Activated T-helper 1 cell treated with anti-CD3 and anti-CD28 coated beads, Interleukin-12 subunit alpha, Interleukin-12 subunit beta, Interleukin-2, Interleukin-4 antibody, amounts not matched to agents 30 ng/mL and 10 ng/mL and 1 ng/mL, durations not matched to agents 14 hours and 24 hours and 36 hours (primary cell): ENCODE measurements at regions of chr10 and their contacts with region 1.

Region 1: DNA sequence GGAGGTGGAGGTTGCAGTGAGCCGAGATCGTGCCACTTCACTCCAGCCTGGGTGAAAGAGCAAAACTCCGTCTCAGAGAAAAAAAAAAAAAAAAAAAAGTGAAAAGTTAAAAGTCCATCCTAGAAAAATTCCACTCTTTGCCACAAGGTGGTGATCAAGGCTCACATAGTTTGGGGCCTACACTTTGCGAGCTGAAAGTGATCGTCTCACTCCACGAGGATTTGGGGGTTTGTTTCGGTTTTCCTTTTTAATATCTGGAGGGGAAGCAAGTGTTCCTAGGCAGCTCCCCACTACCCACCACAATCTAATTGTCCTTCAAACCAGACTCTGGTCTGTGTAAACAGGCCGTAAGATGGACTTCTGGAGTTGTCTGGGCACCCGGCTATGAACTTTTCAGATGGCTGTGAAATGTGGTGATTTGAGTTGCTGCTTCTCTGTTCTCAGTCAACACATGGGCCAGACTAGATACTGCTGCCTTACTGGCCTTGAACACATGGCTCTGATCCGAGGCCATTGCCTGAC is 27.1 kb downstream of the PRLHR start:
- DNase-seq: peak; percentile 40
- H3K4me3 Mint-ChIP-seq: peak overlapping the region; percentile 5
- H3K27ac Mint-ChIP-seq: no peak overlapping the region
- H3K4me1 Mint-ChIP-seq: no peaks in the 10 kb centered on the region
- H3K27me3 Mint-ChIP-seq: peaks cover 4% of the 10 kb centered on the region

Region 2: DNA sequence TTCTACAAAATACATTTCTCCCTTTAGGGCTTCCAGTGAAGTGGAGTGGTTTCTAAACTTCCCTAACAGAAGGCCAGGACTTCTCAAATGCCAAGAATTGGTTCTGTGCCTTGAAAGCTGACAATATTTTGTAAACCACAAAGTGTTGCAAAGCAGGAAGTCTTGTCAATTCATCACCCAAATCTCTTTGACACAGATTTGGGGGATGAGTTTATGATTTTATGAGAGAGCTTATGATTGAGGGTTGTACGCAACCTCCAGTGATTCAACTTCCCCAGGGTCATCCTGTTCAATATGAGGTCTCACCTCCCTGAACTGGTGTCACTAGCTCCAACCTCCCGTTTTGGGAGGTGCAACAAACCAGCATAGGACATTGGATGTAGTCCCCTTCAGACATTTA is 56.7 kb before region 1 on chr10:
- intact Hi-C with region 1: no loop called
- DNase-seq: no peak
- H3K4me3 Mint-ChIP-seq: no peak overlapping the region
- H3K27ac Mint-ChIP-seq: no peak overlapping the region
- H3K4me1 Mint-ChIP-seq: no peaks in the 10 kb centered on the region
- H3K27me3 Mint-ChIP-seq: peaks cover 5% of the 10 kb centered on the region

Region 3: GRCh38 chr10:118720685-118721538 is 152.5 kb after region 1 on chr10:
- intact Hi-C with region 1: loop called (anchors 1 kb)
- DNase-seq: peak; percentile 34
- H3K4me3 Mint-ChIP-seq: no peak overlapping the region
- H3K27ac Mint-ChIP-seq: no peak overlapping the region
- H3K4me1 Mint-ChIP-seq: peaks cover 15% of the 10 kb centered on the region
- H3K27me3 Mint-ChIP-seq: no peaks in the 10 kb centered on the region

Region 4: GRCh38 chr10:118800920-118801319 is 232.5 kb after region 1 on chr10:
- intact Hi-C with region 1: loop called (anchors 1 kb)
- DNase-seq: no peak
- H3K4me3 Mint-ChIP-seq: no peak overlapping the region
- H3K27ac Mint-ChIP-seq: no peak overlapping the region
- H3K4me1 Mint-ChIP-seq: no peaks in the 10 kb centered on the region
- H3K27me3 Mint-ChIP-seq: peaks cover 18% of the 10 kb centered on the region

Region 5: GRCh38 chr10:119030421-119031250 is 462.2 kb after region 1 on chr10:
- intact Hi-C with region 1: loop called (anchors 2 kb)
- DNase-seq: peak; percentile 39
- H3K4me3 Mint-ChIP-seq: peak overlapping the region; percentile 73
- H3K27ac Mint-ChIP-seq: peak overlapping the region; percentile 40
- H3K4me1 Mint-ChIP-seq: peaks cover 25% of the 10 kb centered on the region
- H3K27me3 Mint-ChIP-seq: peaks cover 7% of the 10 kb centered on the region